PC-9 (cell line): ENCODE measurements at regions of chr2 and their contacts with region 1.

Region 1: GRCh38 chr2:164917296-164917903 is 37.9 kb downstream of the SLC38A11 start:
- DNase-seq: peak in 1 of 2 experiments; percentile 26
- H3K4me3 ChIP-seq: no peak overlapping the region
- H3K27ac ChIP-seq: no peak overlapping the region
- H3K4me1 ChIP-seq: peaks cover 30% of the 10 kb centered on the region
- H3K27me3 ChIP-seq: no peaks in the 10 kb centered on the region
- CTCF ChIP-seq: peak; percentile 63

Region 2: DNA sequence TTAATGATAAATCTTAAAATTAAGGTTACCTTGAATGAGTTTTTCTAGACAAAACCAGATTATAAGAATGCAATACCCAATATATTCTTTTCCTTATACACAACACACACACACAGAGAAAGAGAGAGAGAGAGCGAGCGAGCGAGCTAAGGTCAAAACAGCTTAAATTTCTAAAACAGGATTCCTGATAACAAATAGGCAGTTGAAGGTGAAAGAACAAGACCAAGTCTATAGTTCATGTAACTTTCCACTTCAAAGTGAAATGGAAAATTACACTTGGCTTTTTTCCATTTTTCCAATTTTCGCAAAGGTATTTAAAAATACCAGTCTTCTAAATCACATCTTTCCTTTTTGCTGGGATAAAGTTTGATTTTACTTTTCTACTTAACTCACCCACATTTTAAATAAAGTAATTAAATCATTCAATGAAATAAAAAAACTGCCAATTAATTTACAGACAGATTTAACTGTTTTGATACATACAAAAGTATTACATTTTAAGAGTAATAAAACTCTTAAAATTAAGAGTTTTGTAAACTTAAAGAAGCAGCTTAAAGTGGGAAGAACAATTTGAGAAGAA is 174.6 kb before region 1 on chr2:
- CTCF ChIA-PET with region 1: no interaction called
- POLR2A ChIA-PET with region 1: no interaction called
- intact Hi-C with region 1: loop called (anchors 1 kb)
- DNase-seq: no peak
- H3K4me3 ChIP-seq: no peak overlapping the region
- H3K27ac ChIP-seq: no peak overlapping the region
- H3K4me1 ChIP-seq: peaks cover 7% of the 10 kb centered on the region; the same call in 1 of the 2 replicates
- H3K27me3 ChIP-seq: no peaks in the 10 kb centered on the region
- CTCF ChIP-seq: no peak

Region 3: DNA sequence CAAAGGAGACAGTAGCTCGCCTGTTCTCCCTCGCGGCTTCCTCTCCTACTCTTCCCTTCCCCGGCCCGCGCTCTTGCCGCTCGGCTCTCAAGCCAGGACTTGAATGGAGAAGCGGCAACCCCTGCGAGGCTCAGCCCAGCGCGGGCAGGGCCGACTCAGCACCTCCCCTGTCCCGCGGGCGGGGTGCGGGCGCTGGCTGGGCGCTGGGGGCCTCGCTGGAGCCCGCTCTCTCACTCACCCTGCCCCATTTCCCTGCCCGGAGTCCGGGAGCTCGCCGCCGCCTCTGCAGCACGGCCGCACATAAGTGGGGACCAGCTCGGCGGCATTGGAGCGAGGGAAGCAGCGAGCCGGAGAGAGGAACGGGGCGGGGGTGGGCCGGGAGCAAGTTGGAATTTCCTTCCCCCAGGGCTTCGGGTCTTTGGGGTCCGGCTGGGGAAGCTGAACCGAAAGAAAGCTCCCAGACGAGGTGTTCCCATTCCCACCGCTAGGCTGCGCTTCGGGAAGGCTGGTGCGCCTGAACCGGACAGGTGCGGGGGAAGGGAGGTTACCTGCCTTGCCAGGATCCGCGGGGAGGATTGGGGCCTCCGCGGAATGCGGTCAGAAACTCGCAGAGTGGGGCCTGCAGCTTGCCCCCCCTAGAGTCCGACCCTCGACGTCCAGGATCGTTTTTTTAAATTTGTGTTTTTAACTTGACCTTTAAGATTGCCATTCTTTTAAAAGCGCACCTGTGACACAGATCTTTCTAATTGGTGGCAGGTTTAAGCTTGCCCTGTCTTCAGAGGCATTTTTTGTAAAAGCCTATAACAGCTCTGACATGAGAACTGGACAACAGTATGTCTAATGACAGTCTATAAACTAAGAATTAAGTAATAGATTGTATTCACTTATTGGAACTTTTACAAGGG is 75.4 kb before region 1 on chr2 and contains the start of gene COBLL1:
- CTCF ChIA-PET with region 1: interaction called, 4 read pairs
- POLR2A ChIA-PET with region 1: no interaction called
- intact Hi-C with region 1: loop called (anchors 1 kb)
- DNase-seq: peak; percentile 64 to 75
- H3K4me3 ChIP-seq: peak within 1 kb of the TSS; percentile 85
- H3K27ac ChIP-seq: peak within 1 kb of the TSS; percentile 69
- H3K4me1 ChIP-seq: peaks cover 19% of the 10 kb centered on the region
- H3K27me3 ChIP-seq: no peaks in the 10 kb centered on the region
- CTCF ChIP-seq: peak; percentile 76
- total RNA-seq, gene COBLL1: 6.6 and 8.0 TPM in 2 replicates